Activated T-helper 2 cell treated with anti-CD3 and anti-CD28 coated beads, Interferon-gamma antibody, Interleukin-2, Interleukin-4, amounts not matched to agents 10 μg/mL and 5 μg/mL and 100 μg/mL, durations not matched to agents 14 hours and 24 hours and 36 hours (primary cell): ENCODE measurements at regions of chr11 and their contacts with region 1.

Region 1: DNA sequence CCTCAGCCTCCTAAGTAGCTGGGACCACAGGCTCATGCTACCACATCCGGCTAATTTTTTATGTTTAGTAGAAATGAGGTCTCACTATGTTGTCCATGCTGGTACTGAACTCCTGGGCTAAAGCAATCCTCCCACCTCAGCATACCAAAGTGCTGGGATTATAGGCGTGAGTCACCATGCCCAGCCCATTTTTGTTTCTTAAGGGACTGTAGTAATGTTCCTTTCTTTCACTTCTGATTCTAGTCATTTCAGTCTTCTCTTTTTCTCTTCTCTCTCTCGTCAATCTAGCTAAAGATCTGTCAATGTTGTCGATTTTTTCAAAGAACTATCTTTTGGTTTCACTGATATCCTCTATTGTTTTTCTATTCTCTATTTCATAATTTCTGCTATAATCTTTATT is 111.0 kb upstream of the APOA1 start:
- DNase-seq: no peak
- H3K4me3 Mint-ChIP-seq: no peak overlapping the region
- H3K27ac Mint-ChIP-seq: no peak overlapping the region
- H3K4me1 Mint-ChIP-seq: peaks cover 18% of the 10 kb centered on the region
- H3K27me3 Mint-ChIP-seq: no peaks in the 10 kb centered on the region

Region 2: GRCh38 chr11:116930177-116930576 is 18.2 kb before region 1 on chr11:
- intact Hi-C with region 1: loop called (anchors 2 kb)
- DNase-seq: peak; percentile 43
- H3K4me3 Mint-ChIP-seq: peak overlapping the region; percentile 78
- H3K27ac Mint-ChIP-seq: peak overlapping the region; percentile 83
- H3K4me1 Mint-ChIP-seq: peaks cover 67% of the 10 kb centered on the region
- H3K27me3 Mint-ChIP-seq: no peaks in the 10 kb centered on the region

Region 3: DNA sequence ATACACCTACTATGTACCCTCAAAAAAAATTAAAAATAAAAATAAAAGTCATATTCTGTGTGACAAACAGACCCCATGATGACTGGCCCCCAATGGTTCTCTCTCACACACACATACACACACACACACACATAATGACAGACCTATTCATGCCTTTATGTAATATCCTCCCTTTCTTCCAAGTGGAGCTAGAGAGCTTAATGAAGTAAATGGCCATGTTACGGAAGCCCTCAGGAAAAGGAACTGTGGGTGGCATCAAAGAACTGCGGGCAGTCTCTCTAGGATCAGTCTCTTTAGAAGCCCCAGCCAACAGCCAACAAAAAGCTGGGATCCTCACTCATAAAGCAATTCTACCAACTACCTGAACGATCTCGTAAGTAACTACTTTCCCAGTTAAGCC is 24.3 kb after region 1 on chr11:
- intact Hi-C with region 1: no loop called
- DNase-seq: no peak
- H3K4me3 Mint-ChIP-seq: no peak overlapping the region
- H3K27ac Mint-ChIP-seq: no peak overlapping the region
- H3K4me1 Mint-ChIP-seq: peaks cover 8% of the 10 kb centered on the region
- H3K27me3 Mint-ChIP-seq: no peaks in the 10 kb centered on the region

Region 4: DNA sequence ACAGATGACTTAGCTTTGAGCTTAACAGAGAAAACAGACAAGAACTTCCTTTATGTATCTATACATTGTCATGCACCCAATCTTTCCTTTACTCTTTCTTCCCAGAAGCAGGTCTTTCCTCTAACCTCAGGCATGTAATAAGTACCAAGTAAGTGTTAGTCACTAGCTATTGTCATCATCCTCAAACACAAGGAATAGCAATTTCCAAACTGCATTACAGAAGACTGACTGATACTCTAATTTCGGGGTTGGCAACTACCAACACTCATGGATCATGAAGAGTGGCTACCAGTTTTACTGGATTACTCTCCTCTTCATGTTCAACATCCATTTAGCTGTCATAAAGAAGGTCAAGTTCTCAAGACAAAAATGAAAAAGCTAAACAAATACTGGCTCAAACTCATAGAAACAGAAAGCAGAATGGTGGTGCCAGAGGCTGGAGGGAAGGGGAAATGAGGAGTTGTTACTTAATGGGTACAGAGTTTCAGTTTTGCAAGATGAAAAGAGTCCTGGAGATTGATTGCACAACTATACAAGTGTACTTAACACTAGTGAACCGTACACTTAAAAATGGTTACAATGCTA is 38.2 kb after region 1 on chr11:
- intact Hi-C with region 1: loop called (anchors 1 kb)
- DNase-seq: no peak
- H3K4me3 Mint-ChIP-seq: peak overlapping the region; percentile 49
- H3K27ac Mint-ChIP-seq: peak overlapping the region; percentile 80
- H3K4me1 Mint-ChIP-seq: peaks cover 56% of the 10 kb centered on the region
- H3K27me3 Mint-ChIP-seq: no peaks in the 10 kb centered on the region

Region 5: GRCh38 chr11:117064275-117064674 is 115.9 kb after region 1 on chr11:
- intact Hi-C with region 1: loop called (anchors 5 kb)
- DNase-seq: no peak
- H3K4me3 Mint-ChIP-seq: no peak overlapping the region
- H3K27ac Mint-ChIP-seq: peak overlapping the region; percentile 36
- H3K4me1 Mint-ChIP-seq: peaks cover 49% of the 10 kb centered on the region
- H3K27me3 Mint-ChIP-seq: no peaks in the 10 kb centered on the region

Region 6: DNA sequence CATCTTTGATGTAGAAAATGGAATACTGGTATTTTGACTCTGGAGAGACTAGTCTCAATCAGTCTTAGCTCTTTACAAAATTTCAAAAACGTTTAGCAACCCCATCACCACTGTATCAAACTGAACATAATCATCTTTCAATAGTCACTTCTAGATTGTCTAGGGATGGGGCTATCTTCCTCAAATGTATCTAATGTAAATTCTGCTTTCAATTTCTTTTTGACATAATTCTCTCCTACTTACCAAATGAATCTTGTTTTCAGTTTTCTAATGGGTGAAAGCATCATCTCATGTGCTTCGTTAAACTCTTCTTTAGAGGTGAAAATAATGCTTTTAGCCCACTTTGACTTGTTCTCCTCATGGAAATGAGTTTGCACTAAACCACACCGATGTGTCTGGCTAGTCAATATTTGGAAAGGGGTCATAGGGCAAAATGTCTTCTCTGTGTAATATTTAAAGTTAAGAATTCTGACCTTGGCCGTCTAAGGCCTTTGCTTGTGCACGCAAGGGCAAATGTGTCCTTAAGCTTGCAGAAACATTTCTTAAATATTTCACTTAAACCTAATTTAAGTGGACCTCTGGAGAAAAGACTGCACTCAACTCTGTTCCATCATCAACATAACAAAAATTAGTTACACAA is 144.7 kb after region 1 on chr11:
- intact Hi-C with region 1: loop called (anchors 1 kb)
- DNase-seq: no peak
- H3K4me3 Mint-ChIP-seq: no peak overlapping the region
- H3K27ac Mint-ChIP-seq: peak overlapping the region; percentile 67
- H3K4me1 Mint-ChIP-seq: peaks cover 70% of the 10 kb centered on the region
- H3K27me3 Mint-ChIP-seq: no peaks in the 10 kb centered on the region

Region 7: GRCh38 chr11:117366248-117366647 is 417.9 kb after region 1 on chr11:
- intact Hi-C with region 1: no loop called
- DNase-seq: no peak
- H3K4me3 Mint-ChIP-seq: no peak overlapping the region
- H3K27ac Mint-ChIP-seq: no peak overlapping the region
- H3K4me1 Mint-ChIP-seq: no peaks in the 10 kb centered on the region
- H3K27me3 Mint-ChIP-seq: no peaks in the 10 kb centered on the region